Activated CD4-positive, alpha-beta T cell treated with anti-CD3 and anti-CD28 coated beads for 36 hours (primary cell): ENCODE measurements at regions of chr16 and their contacts with region 1.

Region 1: GRCh38 chr16:56356276-56357240 is 68.8 kb downstream of the AMFR start:
- DNase-seq: peak; percentile 77
- ATAC-seq: peak; percentile 84
- H3K4me3 Mint-ChIP-seq: peak overlapping the region; percentile 78
- H3K27ac Mint-ChIP-seq: peak overlapping the region; percentile 98
- H3K4me1 Mint-ChIP-seq: peaks cover 29% of the 10 kb centered on the region
- H3K27me3 Mint-ChIP-seq: no peaks in the 10 kb centered on the region

Region 2: GRCh38 chr16:56191156-56191815 is 165.3 kb before region 1 on chr16 and contains the start of gene GNAO1:
- CTCF ChIA-PET with region 1: interaction called, 3 read pairs
- POLR2A ChIA-PET with region 1: no interaction called
- intact Hi-C with region 1: loop called in 1 of 2 experiments (anchors 2 kb)
- DNase-seq: peak; percentile 79
- ATAC-seq: peak; percentile 73
- H3K4me3 Mint-ChIP-seq: peak within 1 kb of the TSS; percentile 69
- H3K27ac Mint-ChIP-seq: no peak within 1 kb of the TSS
- H3K4me1 Mint-ChIP-seq: peaks cover 31% of the 10 kb centered on the region
- H3K27me3 Mint-ChIP-seq: peaks cover 60% of the 10 kb centered on the region
- total RNA-seq, gene GNAO1: 1.5 to 2.3 TPM

Region 3: GRCh38 chr16:56281256-56281805 is 75.2 kb before region 1 on chr16:
- CTCF ChIA-PET with region 1: no interaction called
- POLR2A ChIA-PET with region 1: no interaction called
- intact Hi-C with region 1: no loop called
- DNase-seq: no peak
- ATAC-seq: no peak
- H3K4me3 Mint-ChIP-seq: no peak overlapping the region
- H3K27ac Mint-ChIP-seq: no peak overlapping the region
- H3K4me1 Mint-ChIP-seq: peaks cover 23% of the 10 kb centered on the region
- H3K27me3 Mint-ChIP-seq: no peaks in the 10 kb centered on the region

Region 4: GRCh38 chr16:56425439-56425832 is 68.9 kb after region 1 on chr16 and contains the start of gene AMFR:
- CTCF ChIA-PET with region 1: no interaction called
- POLR2A ChIA-PET with region 1: interaction called, 5 read pairs
- intact Hi-C with region 1: loop called in 1 of 2 experiments (anchors 1 kb)
- DNase-seq: peak; percentile 80
- ATAC-seq: peak; percentile 97
- H3K4me3 Mint-ChIP-seq: peak within 1 kb of the TSS; percentile 90
- H3K27ac Mint-ChIP-seq: peak within 1 kb of the TSS; percentile 82
- H3K4me1 Mint-ChIP-seq: peaks cover 54% of the 10 kb centered on the region
- H3K27me3 Mint-ChIP-seq: no peaks in the 10 kb centered on the region
- total RNA-seq, gene AMFR: 34.0 to 48.0 TPM